GM10248 (cell line): ENCODE measurements at regions of chr20 and their contacts with region 1.

Region 1: DNA sequence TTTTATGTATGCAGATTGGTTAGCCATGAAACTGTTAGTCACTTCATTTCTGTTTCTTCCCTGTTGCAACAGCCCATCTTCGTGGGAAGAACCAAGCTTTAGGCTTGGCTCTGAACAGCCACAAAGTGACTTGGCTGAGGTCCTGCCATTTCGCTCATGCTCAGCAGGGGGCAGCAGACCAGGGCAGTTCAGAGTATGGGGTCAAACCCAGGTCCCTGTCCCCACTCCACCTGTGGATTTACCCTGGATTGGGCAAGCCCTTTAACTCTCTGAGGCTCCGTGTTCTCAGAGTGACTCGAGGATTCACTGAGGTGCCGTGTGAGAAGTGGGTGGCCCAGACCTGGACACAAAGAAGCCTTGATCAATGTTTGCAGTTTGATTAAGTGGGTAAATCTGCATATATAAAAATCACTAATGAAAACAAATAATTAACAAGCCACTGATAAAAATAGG is 19.8 kb upstream of the MAP1LC3A start:
- DNase-seq: peak; percentile 71
- CTCF ChIP-seq: peak; percentile 65

Region 2: DNA sequence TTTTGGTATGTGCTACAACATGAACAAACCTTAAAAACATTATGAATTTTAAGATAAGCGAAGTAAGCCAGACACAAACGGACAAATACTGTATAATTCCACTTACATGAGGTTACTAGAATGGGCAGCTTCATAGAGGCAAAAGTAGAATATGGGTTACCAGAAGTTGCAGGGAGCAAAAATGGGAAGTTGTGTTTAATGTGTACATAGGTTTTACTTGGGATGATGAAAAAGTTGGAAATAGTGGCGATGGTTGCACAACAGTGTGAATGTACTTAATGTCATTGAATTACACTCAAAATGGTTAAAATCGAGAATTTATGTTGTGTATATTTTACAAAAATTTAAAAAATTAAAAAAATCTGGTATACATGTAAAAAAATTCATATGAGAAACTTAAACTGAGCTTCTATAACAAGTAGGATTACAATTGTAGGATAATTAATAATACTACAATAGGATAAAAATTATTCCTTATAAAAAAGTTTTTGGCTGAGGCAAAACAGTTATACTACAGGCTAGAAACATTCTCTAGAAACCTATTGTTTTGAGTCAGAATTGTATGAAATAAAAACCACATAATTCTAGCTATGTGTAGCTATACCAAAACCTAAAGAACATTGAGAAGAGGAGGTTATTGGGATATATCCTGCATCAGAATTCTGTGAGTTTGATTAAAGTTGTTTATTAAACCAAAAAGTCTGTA is 47.3 kb before region 1 on chr20:
- CTCF ChIA-PET with region 1: no interaction called
- POLR2A ChIA-PET with region 1: no interaction called
- DNase-seq: no peak
- CTCF ChIP-seq: no peak

Region 3: GRCh38 chr20:34516247-34517113 is 22.2 kb before region 1 on chr20 and contains the start of gene DYNLRB1:
- CTCF ChIA-PET with region 1: interaction called, 19 read pairs
- POLR2A ChIA-PET with region 1: no interaction called
- DNase-seq: peak; percentile 92
- CTCF ChIP-seq: no peak

Region 4: GRCh38 chr20:34522969-34523871 is 15.5 kb before region 1 on chr20:
- CTCF ChIA-PET with region 1: interaction called, 19 read pairs
- POLR2A ChIA-PET with region 1: no interaction called
- DNase-seq: peak; percentile 61
- CTCF ChIP-seq: peak; percentile 50

Region 5: GRCh38 chr20:34558320-34559218 is 19.9 kb after region 1 on chr20 and contains the start of gene MAP1LC3A:
- CTCF ChIA-PET with region 1: interaction called, 14 read pairs
- POLR2A ChIA-PET with region 1: no interaction called
- DNase-seq: peak; percentile 94
- CTCF ChIP-seq: no peak

Region 6: GRCh38 chr20:34704177-34705007 is 165.7 kb after region 1 on chr20 and contains the start of gene TP53INP2:
- CTCF ChIA-PET with region 1: interaction called, 56 read pairs
- POLR2A ChIA-PET with region 1: no interaction called
- DNase-seq: peak; percentile 89
- CTCF ChIP-seq: no peak